ENCODE measurements at regions of chr19 and their contacts with region 1.

Region 1: DNA sequence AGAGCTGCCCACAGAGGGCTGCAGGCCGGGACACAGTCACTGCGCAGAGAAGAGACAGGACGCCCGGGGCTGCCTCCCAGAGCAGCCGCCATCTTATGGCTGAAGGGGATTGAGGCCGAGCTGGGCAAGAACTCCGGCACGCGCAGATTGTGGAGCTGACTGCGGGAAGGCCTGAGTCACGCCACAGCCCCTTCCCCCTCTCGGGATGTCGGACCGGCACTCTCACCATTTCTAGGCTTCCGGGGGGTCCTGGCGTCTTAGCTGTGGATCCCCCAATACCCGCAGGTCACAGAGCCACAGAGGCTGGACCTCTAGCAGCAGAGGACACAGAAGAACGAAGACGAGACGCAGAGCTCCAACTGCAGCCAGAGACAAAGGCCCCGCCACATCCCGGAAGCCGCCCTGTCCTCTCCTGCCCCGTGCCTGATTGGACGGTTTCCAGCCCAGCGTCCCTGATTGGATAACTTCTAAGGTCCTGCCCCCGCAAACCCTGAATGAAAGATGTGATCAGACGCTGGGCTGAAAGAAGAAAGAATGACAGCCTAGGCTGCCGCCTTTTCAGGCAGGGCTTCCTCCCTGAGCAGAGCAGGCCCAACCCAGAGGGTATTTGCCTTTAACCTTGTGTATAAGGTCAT is at the start of gene ZNF43:
- DNase-seq: peak; percentile 76 to 96 (median 93)
- ATAC-seq: peak; percentile 99
- H3K4me3 ChIP-seq: peak within 1 kb of the TSS; percentile 97
- H3K4me3 Mint-ChIP-seq: peak within 1 kb of the TSS; percentile 93 to 99 (median 98)
- H3K27ac ChIP-seq: peak within 1 kb of the TSS; percentile 88
- H3K27ac Mint-ChIP-seq: peak within 1 kb of the TSS; percentile 96 to 99 (median 98)
- H3K4me1 ChIP-seq: peaks cover 5 to 9% of the 10 kb centered on the region in 2 donors
- H3K4me1 Mint-ChIP-seq: peaks cover 3 to 48% (median 35%) of the 10 kb centered on the region in 7 donors
- H3K27me3 ChIP-seq: no peaks in the 10 kb centered on the region
- H3K27me3 Mint-ChIP-seq: no peaks in the 10 kb centered on the region
- total RNA-seq, gene ZNF43: 20.5 to 39.3 (median 36.2) TPM

Region 2: DNA sequence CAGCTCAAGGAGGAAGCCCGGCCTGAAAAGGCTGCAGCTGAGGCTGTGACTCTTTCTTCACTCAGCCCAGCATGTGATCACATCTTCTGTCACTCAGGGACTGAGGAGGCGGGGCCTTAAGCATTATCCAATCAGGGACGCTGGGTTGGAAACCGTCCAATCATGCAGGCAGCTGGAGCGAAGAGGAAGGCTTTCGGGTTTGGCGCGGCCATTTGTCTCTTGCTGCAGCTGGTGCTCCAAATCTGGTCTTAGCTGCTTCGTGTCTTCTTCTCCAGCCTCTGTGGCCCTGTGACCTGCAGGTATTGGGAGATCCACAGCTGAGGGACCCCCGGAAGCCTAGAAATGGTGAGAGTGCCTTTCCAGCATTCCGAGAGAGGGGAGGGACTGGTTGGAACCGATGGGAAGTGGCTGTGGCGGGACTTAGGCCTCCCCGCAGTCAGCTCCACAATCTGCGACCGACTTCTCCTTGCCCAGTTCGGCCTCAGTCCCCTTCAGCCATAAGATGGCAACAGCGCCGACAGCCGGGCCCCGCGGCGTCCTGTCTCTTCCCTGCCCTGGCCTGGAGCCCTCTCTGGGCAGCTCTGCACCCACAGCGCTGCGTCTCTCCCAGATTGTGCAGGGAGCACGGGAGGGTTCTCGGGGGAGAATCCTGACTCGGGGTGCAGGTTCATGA is 1758.0 kb before region 1 on chr19 and contains the start of gene ZNF90:
- CTCF ChIA-PET with region 1: no interaction called
- POLR2A ChIA-PET with region 1: no interaction called
- intact Hi-C with region 1: loop called in 1 of 2 experiments (anchors 5 kb)
- DNase-seq: peak; percentile 57 to 90 (median 84)
- ATAC-seq: peak; percentile 99
- H3K4me3 ChIP-seq: peak within 1 kb of the TSS; percentile 86
- H3K4me3 Mint-ChIP-seq: peak within 1 kb of the TSS; percentile 86 to 89 (median 88)
- H3K27ac ChIP-seq: no peak within 1 kb of the TSS
- H3K27ac Mint-ChIP-seq: peak within 1 kb of the TSS; percentile 31 to 82 (median 54)
- H3K4me1 ChIP-seq: peaks cover 4 to 8% of the 10 kb centered on the region in 2 donors
- H3K4me1 Mint-ChIP-seq: peaks cover 0 to 27% (median 14%) of the 10 kb centered on the region in 7 donors
- H3K27me3 ChIP-seq: no peaks in the 10 kb centered on the region
- H3K27me3 Mint-ChIP-seq: no peaks in the 10 kb centered on the region
- total RNA-seq, gene ZNF90: 3.4 to 7.7 (median 4.5) TPM

Region 3: DNA sequence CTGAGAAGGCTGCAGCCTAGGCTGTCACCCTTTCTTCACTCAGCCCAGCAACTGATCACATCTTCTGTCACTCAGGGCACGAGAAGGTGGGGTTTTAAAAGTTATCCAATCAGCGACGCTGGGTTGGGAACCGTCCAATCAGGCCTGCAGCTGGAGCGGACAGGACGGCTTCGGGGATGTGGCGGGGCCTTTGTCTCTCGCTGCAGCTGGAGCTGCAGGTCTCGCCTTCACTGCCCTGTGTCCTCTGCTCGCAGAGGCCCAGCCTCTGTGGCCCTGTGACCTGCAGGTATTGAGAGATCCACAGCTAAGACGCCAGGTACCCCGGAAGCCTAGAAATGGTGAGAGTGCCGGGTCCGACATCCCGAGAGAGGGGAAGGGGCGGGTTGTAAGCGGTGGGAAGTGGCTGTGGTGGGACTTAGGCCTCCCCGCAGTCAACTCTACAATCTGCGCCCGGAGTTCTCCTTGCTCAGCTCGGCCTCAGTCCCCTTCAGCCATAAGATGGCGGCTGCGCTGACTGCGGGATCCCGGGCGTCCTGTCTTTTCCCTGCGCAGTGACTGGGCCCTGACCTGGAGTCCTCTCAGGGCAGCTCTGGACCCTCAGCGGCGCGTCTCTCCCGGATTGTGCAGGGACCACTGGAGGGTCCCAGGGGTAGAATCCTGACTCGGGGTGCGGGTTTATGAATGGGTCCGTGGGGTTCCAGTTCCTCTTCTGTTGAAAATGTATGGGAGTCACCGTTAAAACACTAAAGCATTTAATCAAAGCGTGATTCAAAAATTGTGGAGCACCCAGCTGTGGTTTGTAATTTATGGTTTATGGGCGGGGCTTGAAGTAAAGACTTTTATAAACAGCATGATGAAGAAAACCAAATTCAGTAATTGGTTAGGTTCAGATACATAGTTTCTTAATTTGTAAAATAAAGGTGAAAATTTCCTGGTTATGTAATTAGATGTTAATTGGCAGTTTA is 753.6 kb before region 1 on chr19 and contains the start of gene ZNF714:
- CTCF ChIA-PET with region 1: no interaction called
- POLR2A ChIA-PET with region 1: no interaction called
- intact Hi-C with region 1: loop called (anchors 10 kb)
- DNase-seq: peak; percentile 55 to 90 (median 80)
- ATAC-seq: peak; percentile 100
- H3K4me3 ChIP-seq: peak within 1 kb of the TSS; percentile 92
- H3K4me3 Mint-ChIP-seq: peak within 1 kb of the TSS; percentile 91 to 100 (median 99)
- H3K27ac ChIP-seq: peak within 1 kb of the TSS; percentile 74
- H3K27ac Mint-ChIP-seq: peak within 1 kb of the TSS; percentile 85 to 99 (median 95)
- H3K4me1 ChIP-seq: no peaks in the 10 kb centered on the region
- H3K4me1 Mint-ChIP-seq: peaks cover 3 to 24% (median 18%) of the 10 kb centered on the region in 7 donors
- H3K27me3 ChIP-seq: no peaks in the 10 kb centered on the region
- H3K27me3 Mint-ChIP-seq: no peaks in the 10 kb centered on the region
- total RNA-seq, gene ZNF714: 7.4 to 22.3 (median 13.3) TPM

Region 4: GRCh38 chr19:21568816-21569493 is 267.0 kb before region 1 on chr19:
- CTCF ChIA-PET with region 1: no interaction called
- POLR2A ChIA-PET with region 1: interaction called, 3 read pairs
- intact Hi-C with region 1: loop called in 1 of 2 experiments (anchors 1 kb)
- DNase-seq: peak; percentile 54 to 94 (median 89)
- ATAC-seq: peak; percentile 99
- H3K4me3 ChIP-seq: peak overlapping the region; percentile 64
- H3K4me3 Mint-ChIP-seq: peak overlapping the region; percentile 85 to 99 (median 94)
- H3K27ac ChIP-seq: peak overlapping the region; percentile 71
- H3K27ac Mint-ChIP-seq: peak overlapping the region; percentile 94 to 99 (median 96)
- H3K4me1 ChIP-seq: no peaks in the 10 kb centered on the region
- H3K4me1 Mint-ChIP-seq: peaks cover 0 to 44% (median 24%) of the 10 kb centered on the region in 7 donors
- H3K27me3 ChIP-seq: no peaks in the 10 kb centered on the region
- H3K27me3 Mint-ChIP-seq: no peaks in the 10 kb centered on the region

Region 5: GRCh38 chr19:22052644-22053013 is 216.7 kb after region 1 on chr19:
- CTCF ChIA-PET with region 1: no interaction called
- POLR2A ChIA-PET with region 1: interaction called, 8 read pairs
- intact Hi-C with region 1: loop called in 1 of 2 experiments (anchors 1 kb)
- DNase-seq: no peak
- ATAC-seq: peak; percentile 44
- H3K4me3 ChIP-seq: peak overlapping the region; percentile 76
- H3K4me3 Mint-ChIP-seq: peak overlapping the region; percentile 89 to 96 (median 94)
- H3K27ac ChIP-seq: peak overlapping the region; percentile 72
- H3K27ac Mint-ChIP-seq: peak overlapping the region; percentile 65 to 92 (median 88)
- H3K4me1 ChIP-seq: no peaks in the 10 kb centered on the region
- H3K4me1 Mint-ChIP-seq: peaks cover 0 to 14% (median 0%) of the 10 kb centered on the region in 7 donors
- H3K27me3 ChIP-seq: no peaks in the 10 kb centered on the region
- H3K27me3 Mint-ChIP-seq: no peaks in the 10 kb centered on the region

Region 6: DNA sequence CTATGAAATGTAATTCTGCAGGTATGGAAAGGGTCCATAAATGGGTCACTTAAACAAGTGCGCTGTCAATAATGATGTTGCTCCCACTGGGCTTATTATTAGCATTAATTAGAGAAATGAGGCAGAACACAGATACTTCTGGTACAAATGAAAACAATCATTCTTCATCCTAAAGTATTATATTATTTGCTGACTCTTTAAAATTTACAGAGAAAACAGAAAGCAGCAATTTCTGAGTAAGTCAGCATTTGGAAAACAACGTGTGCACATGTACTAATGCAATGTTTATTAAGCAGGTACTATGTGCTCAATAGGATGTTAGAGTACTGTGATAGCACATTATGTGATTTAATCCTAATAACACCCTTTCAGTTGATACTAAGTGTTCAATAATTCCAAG is 363.2 kb after region 1 on chr19:
- CTCF ChIA-PET with region 1: no interaction called
- POLR2A ChIA-PET with region 1: no interaction called
- intact Hi-C with region 1: no loop called
- DNase-seq: no peak
- ATAC-seq: no peak
- H3K4me3 ChIP-seq: no peak overlapping the region
- H3K4me3 Mint-ChIP-seq: no peak overlapping the region
- H3K27ac ChIP-seq: no peak overlapping the region
- H3K27ac Mint-ChIP-seq: no peak overlapping the region
- H3K4me1 ChIP-seq: no peaks in the 10 kb centered on the region
- H3K4me1 Mint-ChIP-seq: no peaks in the 10 kb centered on the region
- H3K27me3 ChIP-seq: no peaks in the 10 kb centered on the region
- H3K27me3 Mint-ChIP-seq: no peaks in the 10 kb centered on the region

Region 7: DNA sequence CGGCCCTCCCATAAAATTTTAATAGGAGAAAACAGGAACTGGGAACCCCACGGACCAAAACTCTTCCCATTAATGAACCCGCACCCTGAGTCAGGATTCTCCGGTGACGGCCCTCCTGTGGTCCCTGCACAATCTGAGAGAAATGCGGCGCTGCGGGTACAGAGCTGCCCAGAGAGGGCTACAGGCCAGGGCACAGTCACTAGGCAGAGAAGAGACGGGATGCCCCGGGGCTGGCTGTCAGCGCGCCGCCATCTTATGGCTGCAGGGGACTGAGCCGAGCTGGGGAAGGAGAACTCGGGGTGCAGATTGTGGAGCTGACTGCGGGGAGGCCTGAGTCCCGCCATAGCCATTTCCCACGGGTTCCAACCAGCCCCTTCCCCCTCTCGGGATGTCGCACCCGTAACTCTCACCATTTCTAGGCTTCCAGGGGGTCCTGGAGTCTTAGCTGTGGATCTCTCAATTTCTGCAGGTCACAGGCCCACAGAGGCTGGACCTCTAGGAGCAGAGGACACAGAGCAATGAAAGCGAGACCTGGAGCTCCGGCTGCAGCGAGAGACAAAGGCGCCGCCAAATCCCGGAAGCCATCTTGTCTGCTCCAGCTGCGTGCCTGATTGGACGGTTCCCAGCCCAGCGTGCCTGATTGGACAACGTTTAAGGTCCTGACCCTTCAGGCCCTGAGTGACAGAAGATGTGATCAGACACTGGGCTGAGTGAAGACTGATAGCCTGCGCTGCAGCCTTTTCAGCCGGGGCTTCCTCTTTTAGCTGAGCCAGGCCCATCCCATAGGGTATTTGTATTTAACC is 1850.9 kb after region 1 on chr19 and contains the start of gene ZNF675:
- CTCF ChIA-PET with region 1: no interaction called
- POLR2A ChIA-PET with region 1: no interaction called
- intact Hi-C with region 1: loop called in 1 of 2 experiments (anchors 10 kb)
- DNase-seq: peak; percentile 68 to 90 (median 87)
- ATAC-seq: peak; percentile 95
- H3K4me3 ChIP-seq: peak within 1 kb of the TSS; percentile 94
- H3K4me3 Mint-ChIP-seq: peak within 1 kb of the TSS; percentile 96 to 99 (median 98)
- H3K27ac ChIP-seq: peak within 1 kb of the TSS; percentile 95
- H3K27ac Mint-ChIP-seq: peak within 1 kb of the TSS; percentile 96 to 99 (median 98)
- H3K4me1 ChIP-seq: peaks cover 9 to 30% of the 10 kb centered on the region in 2 donors
- H3K4me1 Mint-ChIP-seq: peaks cover 14 to 59% (median 50%) of the 10 kb centered on the region in 7 donors
- H3K27me3 ChIP-seq: no peaks in the 10 kb centered on the region
- H3K27me3 Mint-ChIP-seq: no peaks in the 10 kb centered on the region
- total RNA-seq, gene ZNF675: 17.5 to 39.6 (median 24.0) TPM